Lower leg skin (tissue), 4 donors: ENCODE measurements at regions of chr12 and their contacts with region 1.

Region 1: GRCh38 chr12:56978397-56979138 is 21.2 kb upstream of the RDH16 start:
- DNase-seq: peak in 1 of 2 donors; percentile 71
- H3K4me3 ChIP-seq: no peak overlapping the region
- CTCF ChIP-seq: no peak
- POLR2A ChIP-seq: no peak

Region 2: DNA sequence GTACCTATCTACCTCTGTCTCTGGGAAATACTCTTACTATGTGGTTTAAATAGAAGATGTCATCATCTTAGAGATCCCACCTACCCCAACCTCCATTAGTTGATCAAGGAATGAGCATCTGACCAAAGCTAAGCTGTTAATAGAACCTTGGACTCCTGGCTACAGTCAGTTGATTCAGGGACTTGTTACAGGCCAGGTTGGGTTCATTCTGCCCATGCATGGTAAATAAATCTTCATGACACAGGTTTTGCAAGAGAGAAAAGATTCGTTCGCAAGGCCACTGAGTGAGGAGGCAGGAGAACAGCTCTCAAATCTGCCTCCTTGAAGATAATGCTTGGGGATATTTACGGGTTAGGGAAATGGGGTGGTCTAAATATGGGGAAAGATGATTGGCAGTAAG is 63.8 kb before region 1 on chr12:
- intact Hi-C with region 1: loop called (anchors 2 kb)
- DNase-seq: no peak
- H3K4me3 ChIP-seq: no peak overlapping the region
- CTCF ChIP-seq: no peak
- POLR2A ChIP-seq: no peak

Region 3: GRCh38 chr12:57001448-57001906 is 22.9 kb after region 1 on chr12:
- intact Hi-C with region 1: no loop called
- DNase-seq: peak in 1 of 2 donors; percentile 89
- H3K4me3 ChIP-seq: no peak overlapping the region
- CTCF ChIP-seq: peak in 1 of 3 donors; percentile 38
- POLR2A ChIP-seq: no peak

Region 4: GRCh38 chr12:57088459-57089248 is 110.1 kb after region 1 on chr12 and contains the start of gene NAB2:
- intact Hi-C with region 1: no loop called
- DNase-seq: peak; percentile 95 to 99
- H3K4me3 ChIP-seq: peak within 1 kb of the TSS; percentile 77
- CTCF ChIP-seq: no peak
- POLR2A ChIP-seq: peak in 1 of 2 donors; percentile 50
- total RNA-seq, gene NAB2: 44.1 to 89.6 (median 64.6) TPM